Psoas muscle (tissue), 8 donors: ENCODE measurements at regions of chr11 and their contacts with region 1.

Region 1: DNA sequence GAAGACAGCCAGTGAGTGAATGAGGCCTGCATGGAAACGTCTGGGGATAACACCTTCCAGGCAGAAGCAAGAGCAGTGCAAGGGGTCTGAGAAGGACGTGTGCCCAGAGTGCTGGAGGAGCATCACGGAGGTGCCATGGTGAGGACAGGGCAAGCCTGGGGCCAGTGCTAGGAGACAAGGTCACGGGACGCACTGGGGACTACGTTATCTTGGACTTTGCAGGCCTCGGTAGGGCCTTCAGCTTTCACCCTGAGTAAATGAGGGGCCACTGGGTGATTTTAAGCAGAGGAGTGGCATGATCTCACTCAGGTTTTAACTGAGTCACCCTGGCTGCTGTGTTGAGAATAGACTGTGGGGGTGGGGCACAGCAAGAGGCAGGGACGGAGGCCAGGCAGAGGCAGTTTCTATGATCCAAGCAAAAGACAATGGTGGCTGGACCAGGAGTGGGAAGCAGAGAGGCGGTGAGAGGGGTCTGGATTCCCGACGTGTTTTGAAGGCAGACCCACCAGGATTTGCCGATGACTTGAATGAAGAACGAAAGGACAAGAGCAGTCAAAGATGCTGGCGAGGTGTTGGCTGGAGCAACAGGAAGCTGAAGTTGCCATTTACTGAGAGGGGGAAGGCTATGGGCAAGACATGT is 102.7 kb upstream of the PARVA start:
- DNase-seq: no peak
- ATAC-seq: no peak
- H3K4me3 ChIP-seq: no peak overlapping the region
- H3K27ac ChIP-seq: no peak overlapping the region
- H3K4me1 ChIP-seq: no peaks in the 10 kb centered on the region
- H3K27me3 ChIP-seq: no peaks in the 10 kb centered on the region
- CTCF ChIP-seq: no peak

Region 2: DNA sequence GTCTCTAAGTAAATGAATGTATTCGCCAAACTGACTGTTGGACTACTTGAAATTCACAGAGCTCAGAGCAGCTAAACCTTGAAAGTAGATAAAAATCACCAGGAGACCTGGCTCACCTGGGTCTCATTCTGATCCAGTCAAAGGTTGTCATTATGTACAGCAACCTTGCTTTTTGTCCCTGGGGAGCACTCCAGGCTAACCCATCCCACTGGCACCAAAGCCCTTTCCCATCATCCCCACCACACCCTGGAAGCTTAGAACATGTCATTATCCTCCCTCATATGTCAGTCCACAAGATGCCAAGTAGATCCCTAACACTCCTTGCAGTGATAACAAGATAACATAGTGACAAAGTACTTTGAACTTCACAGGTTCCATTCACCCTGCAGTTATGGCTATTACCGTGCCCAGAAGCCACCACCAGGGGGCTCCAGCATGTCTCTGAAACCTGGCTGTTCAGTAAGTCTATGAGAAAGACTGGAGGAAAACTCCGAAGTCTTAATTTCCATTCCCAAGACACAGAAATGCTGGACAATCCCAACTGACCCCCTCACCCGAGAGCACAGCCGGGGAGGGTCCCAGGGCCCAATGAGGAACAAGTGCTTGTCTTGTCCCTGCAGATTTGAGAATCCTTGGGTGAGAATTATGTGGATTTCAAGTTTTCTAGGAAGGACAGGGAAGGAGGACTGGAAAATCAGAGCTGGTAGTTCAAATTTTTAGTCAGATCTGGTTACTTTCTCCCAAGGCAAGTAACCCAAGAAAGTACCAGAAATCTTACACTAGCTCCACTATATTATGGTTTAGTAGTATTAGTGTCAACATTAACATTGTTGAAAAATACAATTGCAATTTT is 475.9 kb before region 1 on chr11:
- intact Hi-C with region 1: loop called in 1 of 2 experiments (anchors 5 kb)
- DNase-seq: peak; percentile 84 to 90
- ATAC-seq: peak; percentile 74 to 99 (median 94)
- H3K4me3 ChIP-seq: no peak overlapping the region
- H3K27ac ChIP-seq: no peak overlapping the region
- H3K4me1 ChIP-seq: no peaks in the 10 kb centered on the region
- H3K27me3 ChIP-seq: peaks cover 0 to 9% (median 3%) of the 10 kb centered on the region in 3 donors
- CTCF ChIP-seq: peak; percentile 72

Region 3: GRCh38 chr11:12100841-12101242 is 173.8 kb before region 1 on chr11:
- intact Hi-C with region 1: loop called in 1 of 2 experiments (anchors 5 kb)
- DNase-seq: no peak
- ATAC-seq: peak; percentile 17 to 70 (median 54)
- H3K4me3 ChIP-seq: no peak overlapping the region
- H3K27ac ChIP-seq: no peak overlapping the region
- H3K4me1 ChIP-seq: no peaks in the 10 kb centered on the region
- H3K27me3 ChIP-seq: peaks cover 0 to 46% (median 4%) of the 10 kb centered on the region in 3 donors
- CTCF ChIP-seq: no peak